ENCODE measurements at regions of chr22 and their contacts with region 1.

Region 1: DNA sequence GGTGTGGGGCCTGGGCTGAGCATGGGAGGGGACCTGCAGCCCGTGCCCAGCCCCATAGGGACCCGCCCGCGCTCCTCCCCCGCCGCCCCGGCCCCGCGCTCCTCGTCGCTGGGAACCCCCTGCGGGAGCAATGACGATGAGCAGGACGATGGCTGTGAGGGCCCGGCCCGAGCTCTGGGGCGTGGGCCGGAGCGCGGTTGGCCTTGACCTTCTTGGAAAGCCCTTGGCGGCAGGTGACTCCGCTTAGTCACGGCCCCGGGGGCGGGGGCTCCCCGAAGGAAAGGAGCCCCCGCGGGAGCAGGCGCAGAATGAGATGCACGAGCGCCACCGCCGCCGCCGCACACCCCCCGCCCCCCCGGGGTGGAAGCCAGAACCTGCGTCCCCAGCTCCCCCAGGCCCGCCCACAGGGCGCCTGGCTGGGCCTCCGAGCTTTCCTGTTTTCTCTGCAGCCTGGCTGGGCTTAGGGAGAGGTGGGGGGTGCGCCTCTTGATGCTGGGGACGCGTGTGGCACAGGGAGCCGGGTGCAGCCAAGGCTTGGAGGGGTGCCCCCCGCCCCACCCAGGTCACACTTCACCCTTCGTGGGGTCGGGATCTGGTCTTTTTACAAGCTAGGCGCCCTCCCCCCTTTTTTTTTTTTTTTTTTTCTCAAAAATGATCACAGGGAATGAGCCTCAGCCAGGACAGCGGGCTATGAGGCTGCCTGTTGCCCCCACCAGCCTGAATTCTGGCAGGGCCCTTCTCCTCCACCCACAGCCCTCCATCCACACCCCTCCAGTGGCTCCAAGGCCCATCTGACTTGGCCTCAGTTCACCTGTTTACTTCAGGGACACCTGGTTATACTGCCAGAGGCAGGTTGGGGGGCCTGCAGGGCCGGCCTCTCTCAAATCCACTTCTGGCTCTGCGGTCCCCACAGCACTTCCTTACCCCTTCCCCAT is 17.9 kb downstream of the CRELD2 start:
- DNase-seq: peak in 9 of 10 donors; percentile 40 to 95 (median 63)

Region 2: GRCh38 chr22:49975543-49976389 is 39.5 kb after region 1 on chr22:
- intact Hi-C with region 1: no loop called
- DNase-seq: peak in 6 of 10 donors; percentile 6 to 75 (median 40)

Region 3: DNA sequence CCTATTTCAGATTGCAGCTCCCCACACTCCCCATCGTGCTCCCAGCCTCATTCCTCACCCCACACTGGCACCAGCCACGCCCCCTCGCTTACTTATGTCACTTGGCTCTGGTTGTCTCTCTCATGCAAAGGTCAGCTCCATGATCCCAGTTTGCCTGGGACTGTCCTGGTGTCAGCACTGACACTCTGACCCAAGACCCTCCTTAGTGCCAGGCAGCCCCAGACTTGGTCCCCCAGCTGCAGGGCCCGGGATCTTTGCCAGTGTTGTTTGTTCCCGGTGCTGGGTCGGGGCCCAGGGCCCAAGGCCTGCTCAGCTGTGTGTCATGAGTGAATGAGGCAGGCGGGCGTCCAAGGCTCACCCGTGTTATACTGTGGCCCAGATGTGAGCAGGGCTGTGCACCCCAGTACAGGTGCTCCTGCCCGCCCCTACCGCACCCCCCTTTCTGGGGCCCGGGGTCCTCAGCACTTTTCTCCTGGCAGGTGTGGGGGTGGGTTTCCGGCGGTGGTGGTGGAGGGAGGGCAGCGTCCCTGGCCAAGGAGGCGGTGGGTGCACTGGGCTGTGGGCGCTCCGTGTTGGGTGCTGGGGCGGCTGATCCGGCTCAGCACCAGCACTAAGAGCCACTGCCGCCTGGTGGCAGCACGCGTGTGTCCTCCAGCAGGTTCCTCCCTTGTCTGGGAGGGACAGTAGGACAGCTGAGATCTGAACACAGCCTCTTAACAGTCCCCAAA is 56.8 kb after region 1 on chr22:
- intact Hi-C with region 1: loop called (anchors 1 kb)
- DNase-seq: peak; percentile 74 to 98 (median 89)